Uterus (tissue), 4 donors: ENCODE measurements at regions of chr10 and their contacts with region 1.

Region 1: GRCh38 chr10:117541909-117542705 is 439 bp upstream of the EMX2 start:
- DNase-seq: peak; percentile 94 to 96
- H3K4me3 ChIP-seq: peak overlapping the region; percentile 60 to 77
- H3K27ac ChIP-seq: peak overlapping the region; percentile 98
- H3K4me1 ChIP-seq: peaks cover 0 to 3% of the 10 kb centered on the region in 2 donors
- H3K27me3 ChIP-seq: no peaks in the 10 kb centered on the region
- CTCF ChIP-seq: peak in 1 of 4 experiments; percentile 33
- POLR2A ChIP-seq: peak; percentile 92 to 95

Region 2: DNA sequence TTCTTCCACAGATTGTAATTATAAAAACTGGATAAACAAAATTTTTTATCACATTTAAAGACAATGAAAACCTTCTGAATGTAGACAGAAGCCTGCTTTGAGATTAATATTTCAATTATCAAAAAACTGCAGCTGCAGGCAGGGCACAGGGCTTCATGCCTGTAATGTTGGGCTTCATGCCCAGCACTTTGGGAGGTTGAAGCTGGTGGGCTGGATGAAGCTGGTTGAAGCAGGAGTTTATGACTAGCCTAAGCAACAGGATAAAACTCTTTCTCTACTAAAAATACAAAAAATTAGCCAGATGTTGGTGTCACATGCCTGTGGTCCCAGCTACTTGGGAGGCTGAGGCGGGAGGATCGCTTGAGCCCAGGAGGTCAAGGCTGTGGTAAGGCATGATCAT is 208.0 kb before region 1 on chr10:
- intact Hi-C with region 1: no loop called
- DNase-seq: no peak
- H3K4me3 ChIP-seq: no peak overlapping the region
- H3K27ac ChIP-seq: no peak overlapping the region
- H3K4me1 ChIP-seq: no peaks in the 10 kb centered on the region
- H3K27me3 ChIP-seq: no peaks in the 10 kb centered on the region
- CTCF ChIP-seq: no peak
- POLR2A ChIP-seq: no peak

Region 3: GRCh38 chr10:117442944-117443685 is 99.0 kb before region 1 on chr10:
- intact Hi-C with region 1: loop called (anchors 10 kb)
- DNase-seq: peak; percentile 93 to 97
- H3K4me3 ChIP-seq: no peak overlapping the region
- H3K27ac ChIP-seq: peak overlapping the region; percentile 73 to 82
- H3K4me1 ChIP-seq: peaks cover 0 to 7% of the 10 kb centered on the region in 2 donors
- H3K27me3 ChIP-seq: no peaks in the 10 kb centered on the region
- CTCF ChIP-seq: peak; percentile 81 to 94 (median 93)
- POLR2A ChIP-seq: no peak

Region 4: GRCh38 chr10:118042827-118043242 is 500.7 kb after region 1 on chr10:
- intact Hi-C with region 1: loop called (anchors 2 kb)
- DNase-seq: no peak
- H3K4me3 ChIP-seq: peak overlapping the region; percentile 7 to 13
- H3K27ac ChIP-seq: peak overlapping the region; percentile 97 to 99
- H3K4me1 ChIP-seq: no peaks in the 10 kb centered on the region
- H3K27me3 ChIP-seq: no peaks in the 10 kb centered on the region
- CTCF ChIP-seq: no peak
- POLR2A ChIP-seq: no peak

Region 5: GRCh38 chr10:118241229-118242137 is 699.4 kb after region 1 on chr10:
- intact Hi-C with region 1: loop called (anchors 10 kb)
- DNase-seq: peak; percentile 89 to 91
- H3K4me3 ChIP-seq: peak overlapping the region; percentile 18 to 27
- H3K27ac ChIP-seq: peak overlapping the region; percentile 69 to 71
- H3K4me1 ChIP-seq: no peaks in the 10 kb centered on the region
- H3K27me3 ChIP-seq: no peaks in the 10 kb centered on the region
- CTCF ChIP-seq: peak; percentile 87 to 97 (median 90)
- POLR2A ChIP-seq: no peak